ENCODE measurements at regions of chr9 and their contacts with region 1.

Region 1: DNA sequence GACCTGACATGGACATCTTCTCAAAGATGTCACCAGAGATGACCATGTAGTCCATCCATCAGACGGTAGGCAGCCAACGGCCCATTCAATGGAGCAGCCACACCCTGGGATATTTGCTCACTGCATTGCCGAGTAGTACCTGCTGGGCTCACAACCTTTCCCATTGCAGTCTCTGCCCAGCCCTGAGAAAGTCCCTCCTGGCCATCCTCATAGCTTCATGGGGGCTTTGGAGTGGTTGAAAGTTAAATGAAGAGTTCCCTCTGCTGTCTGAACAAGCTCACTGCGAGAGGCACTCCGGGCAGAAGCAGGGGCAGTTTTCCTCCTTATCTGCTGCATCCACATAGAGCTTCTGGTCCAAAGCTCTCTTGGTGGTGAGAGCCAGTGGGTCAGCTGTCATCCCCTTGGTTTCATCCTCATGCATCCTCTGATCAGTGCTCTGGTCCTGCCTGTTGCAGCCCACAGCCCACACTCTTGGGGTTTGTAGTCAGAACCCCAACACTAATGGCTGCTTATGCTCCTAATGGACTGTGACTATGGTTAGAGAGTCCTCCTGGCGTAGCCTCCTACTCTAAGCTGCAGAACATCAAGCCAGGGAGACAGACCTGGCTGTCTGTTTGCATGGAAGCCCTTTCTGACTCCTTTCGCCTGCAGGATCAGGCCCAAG is 23.4 kb downstream of the TNFSF8 start:
- DNase-seq: peak; percentile 46 to 63 (median 55)
- H3K4me3 ChIP-seq: no peak overlapping the region
- H3K27ac ChIP-seq: no peak overlapping the region
- H3K4me1 ChIP-seq: peaks cover 0 to 10% (median 5%) of the 10 kb centered on the region in 4 experiments
- H3K27me3 ChIP-seq: no peaks in the 10 kb centered on the region

Region 2: DNA sequence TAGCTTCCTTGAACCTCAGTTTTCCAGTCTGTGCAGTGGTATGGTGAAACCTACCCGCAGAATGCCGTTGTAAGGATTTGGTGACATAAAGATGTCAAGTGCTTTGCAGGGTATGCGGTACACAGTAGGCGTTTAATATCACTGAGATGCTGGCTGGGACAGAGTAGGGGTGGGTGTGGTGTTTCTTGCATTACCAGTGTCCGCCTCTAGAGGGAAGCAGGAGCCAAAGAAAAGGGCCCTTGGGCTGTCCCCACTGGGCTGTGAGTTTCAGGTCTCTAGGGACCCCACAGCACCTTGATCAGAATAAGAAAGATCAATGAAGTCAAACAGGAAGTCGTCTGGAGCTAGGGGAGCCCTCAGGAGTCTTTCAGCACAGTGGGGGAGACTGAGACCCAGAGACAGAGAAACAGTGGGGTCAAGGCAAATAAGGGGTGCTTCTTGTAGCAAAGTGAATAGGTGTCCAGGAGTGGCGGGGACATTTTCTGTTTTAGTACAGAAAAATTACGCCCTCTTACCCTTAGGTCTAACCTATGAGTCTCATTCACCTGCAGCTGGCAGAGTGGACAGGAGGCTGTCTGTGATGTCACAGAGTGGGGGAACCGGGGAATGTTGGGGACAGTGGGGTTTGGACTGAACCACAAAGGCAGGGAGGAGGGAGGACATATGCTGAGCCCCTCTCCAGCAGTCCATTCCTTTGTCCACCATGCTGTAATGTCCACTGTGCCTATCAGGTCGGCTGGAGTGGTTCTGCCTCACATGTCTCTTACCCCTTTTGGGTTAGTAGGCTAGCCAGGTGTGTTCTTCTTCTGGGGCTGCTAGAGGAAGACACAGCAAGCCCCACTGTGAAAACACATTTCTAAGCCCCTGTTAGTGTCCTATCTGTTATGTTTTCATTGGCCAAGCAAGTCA is 244.7 kb before region 1 on chr9:
- CTCF ChIA-PET with region 1: interaction called, 25 read pairs
- POLR2A ChIA-PET with region 1: no interaction called
- DNase-seq: peak; percentile 42 to 63 (median 56)
- H3K4me3 ChIP-seq: no peak overlapping the region
- H3K27ac ChIP-seq: no peak overlapping the region
- H3K4me1 ChIP-seq: peaks cover 0 to 8% (median 5%) of the 10 kb centered on the region in 4 experiments
- H3K27me3 ChIP-seq: no peaks in the 10 kb centered on the region

Region 3: DNA sequence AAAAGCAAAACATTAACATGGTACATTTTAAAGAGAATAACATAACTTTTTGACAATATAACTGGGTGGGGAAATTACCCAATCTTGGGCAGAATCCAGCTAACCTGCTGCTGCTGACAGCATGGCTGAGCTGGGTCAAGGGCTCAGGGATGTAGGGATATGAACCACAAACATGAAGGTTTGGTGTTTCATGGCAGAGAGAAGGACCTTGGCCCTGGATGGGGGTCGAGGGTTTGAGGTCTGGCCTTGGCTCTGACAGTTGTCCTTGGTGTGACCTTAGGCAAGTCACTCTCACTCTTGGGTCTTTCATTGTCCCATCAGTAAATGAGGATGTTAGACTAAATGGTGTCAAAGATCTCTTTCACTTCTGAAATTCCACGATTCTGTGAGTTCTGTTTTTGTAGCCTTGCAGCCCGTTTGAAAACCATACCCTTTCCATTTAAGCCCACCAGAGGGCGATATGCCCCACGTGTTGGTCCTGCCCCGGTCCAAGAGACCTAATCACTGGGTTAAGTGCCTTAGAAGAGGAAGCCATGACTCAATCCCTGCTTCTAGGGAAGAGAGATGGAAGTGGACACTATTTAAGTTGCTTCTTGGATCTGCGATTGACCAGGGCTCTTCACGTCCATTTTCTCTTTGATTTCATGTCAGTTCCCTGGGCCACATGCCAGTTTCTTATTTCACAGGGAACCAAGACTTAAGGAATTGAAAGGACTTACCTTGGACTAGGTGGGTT is 168.3 kb before region 1 on chr9:
- CTCF ChIA-PET with region 1: interaction called, 188 read pairs
- POLR2A ChIA-PET with region 1: interaction called, 3 read pairs
- DNase-seq: peak; percentile 83 to 93 (median 88)
- H3K4me3 ChIP-seq: no peak overlapping the region
- H3K27ac ChIP-seq: no peak overlapping the region
- H3K4me1 ChIP-seq: peaks cover 0 to 8% (median 2%) of the 10 kb centered on the region in 4 experiments
- H3K27me3 ChIP-seq: peaks cover 0 to 2% (median 0%) of the 10 kb centered on the region in 5 experiments

Region 4: GRCh38 chr9:114919611-114920010 is 12.6 kb after region 1 on chr9:
- CTCF ChIA-PET with region 1: interaction called, 35 read pairs
- POLR2A ChIA-PET with region 1: no interaction called
- DNase-seq: no peak
- H3K4me3 ChIP-seq: no peak overlapping the region
- H3K27ac ChIP-seq: no peak overlapping the region
- H3K4me1 ChIP-seq: peaks cover under 1 to 27% (median 10%) of the 10 kb centered on the region in 4 experiments
- H3K27me3 ChIP-seq: no peaks in the 10 kb centered on the region

Region 5: GRCh38 chr9:114930056-114930812 is 23.2 kb after region 1 on chr9 and contains the start of gene TNFSF8:
- CTCF ChIA-PET with region 1: interaction called, 19 read pairs
- POLR2A ChIA-PET with region 1: no interaction called
- DNase-seq: peak; percentile 79 to 96 (median 95)
- H3K4me3 ChIP-seq: peak within 1 kb of the TSS; percentile 29 to 84 (median 69)
- H3K27ac ChIP-seq: peak within 1 kb of the TSS; percentile 47 to 72
- H3K4me1 ChIP-seq: peaks cover 25 to 45% (median 37%) of the 10 kb centered on the region in 4 experiments
- H3K27me3 ChIP-seq: no peaks in the 10 kb centered on the region

Region 6: DNA sequence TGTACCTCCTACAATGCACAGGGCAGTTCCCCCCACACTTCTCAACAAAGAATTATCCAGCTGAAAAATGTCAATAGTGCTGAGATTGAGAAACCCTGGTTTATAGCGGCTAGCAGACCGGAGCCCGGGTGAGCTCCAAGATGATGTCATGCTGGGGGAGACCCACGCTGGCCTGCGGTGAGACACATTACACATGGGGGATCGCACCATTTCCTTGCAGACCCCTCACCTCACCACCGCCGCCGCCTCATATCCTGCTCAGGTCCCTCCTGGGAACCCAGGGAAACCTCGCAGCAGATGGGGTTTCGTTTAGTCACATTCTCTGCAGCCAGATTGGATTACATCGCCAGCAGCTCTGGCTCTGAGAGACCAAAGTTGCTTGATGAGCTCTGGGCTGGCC is 225.6 kb after region 1 on chr9:
- CTCF ChIA-PET with region 1: no interaction called
- POLR2A ChIA-PET with region 1: no interaction called
- DNase-seq: no peak
- H3K4me3 ChIP-seq: no peak overlapping the region
- H3K27ac ChIP-seq: no peak overlapping the region
- H3K4me1 ChIP-seq: no peaks in the 10 kb centered on the region
- H3K27me3 ChIP-seq: peaks cover 0 to 2% (median 0%) of the 10 kb centered on the region in 5 experiments

Region 7: DNA sequence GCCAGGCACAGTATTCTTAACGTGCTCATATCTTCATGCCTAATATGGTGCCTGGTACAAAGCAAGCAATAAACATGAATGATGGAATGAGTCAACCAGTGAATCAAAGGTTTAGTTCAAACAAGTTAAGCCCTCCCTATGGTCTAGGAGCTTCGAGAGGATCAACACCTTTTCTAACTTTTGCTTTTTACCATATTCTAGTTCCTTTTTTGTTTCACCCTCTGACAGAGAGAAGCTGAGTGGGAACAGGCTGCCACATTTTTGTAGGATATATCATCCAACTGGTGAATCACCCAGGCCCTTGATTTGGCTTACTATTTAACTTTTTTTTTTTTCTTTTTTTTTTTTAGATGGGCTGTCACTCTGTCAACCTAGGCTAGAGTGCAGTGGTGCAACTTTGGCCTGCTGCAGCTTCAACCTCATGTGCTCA is 250.2 kb after region 1 on chr9:
- CTCF ChIA-PET with region 1: no interaction called
- POLR2A ChIA-PET with region 1: no interaction called
- DNase-seq: no peak
- H3K4me3 ChIP-seq: no peak overlapping the region
- H3K27ac ChIP-seq: no peak overlapping the region
- H3K4me1 ChIP-seq: no peaks in the 10 kb centered on the region
- H3K27me3 ChIP-seq: no peaks in the 10 kb centered on the region